MCF 10A (cell line): ENCODE measurements at regions of chr13 and their contacts with region 1.

Region 1: DNA sequence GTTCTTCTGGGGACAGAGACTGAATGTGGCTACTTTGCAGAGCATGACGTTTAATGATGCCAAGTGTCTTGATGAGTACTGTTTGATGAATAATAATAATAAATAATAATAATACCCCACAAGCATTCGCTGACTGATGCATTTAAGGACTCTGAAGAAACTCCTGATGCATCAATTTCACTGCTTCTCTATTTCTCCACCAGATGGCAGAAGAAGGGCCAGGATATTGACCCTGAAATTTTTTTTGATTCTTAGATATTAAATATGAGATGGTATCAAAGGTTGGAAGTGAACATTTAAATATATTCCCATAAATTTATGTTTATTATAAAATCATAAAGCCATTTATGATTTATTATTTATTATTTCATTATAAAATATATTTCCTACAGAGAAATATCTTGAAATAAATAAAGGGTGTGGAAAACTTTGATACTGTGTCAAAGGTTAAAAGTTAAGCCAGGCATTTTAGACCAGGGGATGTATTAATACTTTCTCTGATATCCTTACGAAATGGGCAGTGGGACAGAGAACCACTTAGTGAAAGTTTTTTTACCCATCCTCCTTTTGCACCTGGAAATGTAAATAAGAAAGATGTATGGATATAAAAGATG is 170.9 kb downstream of the LACC1 start:
- DNase-seq: peak; percentile 54
- H3K4me3 Mint-ChIP-seq: no peak overlapping the region
- H3K27ac Mint-ChIP-seq: no peak overlapping the region
- H3K4me1 Mint-ChIP-seq: peaks cover 5% of the 10 kb centered on the region
- H3K27me3 Mint-ChIP-seq: peaks cover 26% of the 10 kb centered on the region
- CTCF ChIP-seq: peak; percentile 62

Region 2: GRCh38 chr13:43911871-43912270 is 138.7 kb before region 1 on chr13:
- CTCF ChIA-PET with region 1: interaction called, 111 read pairs
- POLR2A ChIA-PET with region 1: interaction called, 4 read pairs
- intact Hi-C with region 1: loop called (anchors 1 kb)
- DNase-seq: no peak
- H3K4me3 Mint-ChIP-seq: no peak overlapping the region
- H3K27ac Mint-ChIP-seq: no peak overlapping the region
- H3K4me1 Mint-ChIP-seq: peaks cover 8% of the 10 kb centered on the region
- H3K27me3 Mint-ChIP-seq: no peaks in the 10 kb centered on the region
- CTCF ChIP-seq: no peak

Region 3: DNA sequence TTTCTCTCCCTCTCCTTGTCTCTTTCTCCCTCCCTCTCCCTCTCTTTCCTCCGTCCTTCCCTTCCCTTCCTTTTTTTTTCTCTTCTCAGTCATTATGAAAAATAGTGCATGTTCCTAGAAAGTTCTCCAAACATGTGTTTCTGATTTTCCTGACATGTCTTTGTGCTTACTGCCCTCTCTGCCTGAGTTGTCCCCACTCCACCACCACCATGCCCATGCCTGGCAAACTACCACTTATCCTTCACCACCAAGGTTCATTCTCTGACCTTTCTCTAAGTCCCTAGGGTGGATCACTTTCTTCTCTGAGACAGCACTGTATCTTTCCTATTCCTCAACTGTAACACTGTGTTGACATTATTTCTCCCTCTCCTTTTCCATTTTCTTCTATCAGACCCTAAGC is 72.6 kb before region 1 on chr13:
- CTCF ChIA-PET with region 1: no interaction called
- POLR2A ChIA-PET with region 1: no interaction called
- intact Hi-C with region 1: no loop called
- DNase-seq: no peak
- H3K4me3 Mint-ChIP-seq: no peak overlapping the region
- H3K27ac Mint-ChIP-seq: no peak overlapping the region
- H3K4me1 Mint-ChIP-seq: no peaks in the 10 kb centered on the region
- H3K27me3 Mint-ChIP-seq: peaks cover 19% of the 10 kb centered on the region
- CTCF ChIP-seq: no peak

Region 4: DNA sequence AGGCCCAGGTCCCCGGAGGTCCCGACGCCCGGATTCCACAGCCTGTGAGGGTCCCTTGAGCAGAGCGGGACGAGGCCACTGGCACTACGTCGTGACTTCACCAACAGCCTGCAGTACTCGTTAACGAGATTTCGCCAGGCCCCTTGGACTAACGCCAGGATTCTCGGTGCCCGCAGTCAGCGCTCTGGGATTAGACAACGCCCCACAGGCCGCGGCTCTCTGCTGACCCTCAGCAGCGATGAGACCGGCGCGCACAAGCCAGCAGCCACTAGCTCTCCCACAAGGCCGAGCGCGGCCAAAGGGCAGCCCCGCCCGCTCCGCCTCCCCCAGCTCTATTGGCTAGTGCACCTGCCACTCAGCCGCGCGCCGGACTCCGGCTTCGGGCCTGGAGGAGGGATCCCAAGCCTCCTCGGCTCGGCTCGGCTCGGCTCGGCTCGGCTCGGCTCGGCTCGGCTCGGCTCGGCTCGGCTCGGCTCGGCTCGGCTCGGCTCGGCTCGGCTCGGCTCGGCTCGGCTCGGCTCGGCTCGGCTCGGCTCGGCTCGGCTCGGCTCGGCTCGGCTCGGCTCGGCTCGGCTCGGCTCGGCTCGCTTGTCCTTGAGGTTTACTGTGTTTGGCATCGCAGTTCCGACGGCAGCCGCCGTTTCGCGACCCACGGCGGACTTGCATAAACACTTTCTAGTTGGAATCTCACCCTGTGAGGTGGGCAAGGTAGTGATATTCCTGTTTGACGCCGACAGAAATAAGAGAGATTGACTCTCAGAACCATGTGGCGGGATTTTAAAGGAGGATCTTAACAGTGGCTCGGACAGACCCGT is 91.4 kb after region 1 on chr13:
- CTCF ChIA-PET with region 1: interaction called, 4 read pairs
- POLR2A ChIA-PET with region 1: interaction called, 6 read pairs
- intact Hi-C with region 1: loop called (anchors 2 kb)
- DNase-seq: peak; percentile 97
- H3K4me3 Mint-ChIP-seq: peak overlapping the region; percentile 91
- H3K27ac Mint-ChIP-seq: peak overlapping the region; percentile 100
- H3K4me1 Mint-ChIP-seq: peaks cover 14% of the 10 kb centered on the region
- H3K27me3 Mint-ChIP-seq: no peaks in the 10 kb centered on the region
- CTCF ChIP-seq: no peak

Region 5: GRCh38 chr13:44231786-44232516 is 181.4 kb after region 1 on chr13:
- CTCF ChIA-PET with region 1: no interaction called
- POLR2A ChIA-PET with region 1: no interaction called
- intact Hi-C with region 1: loop called (anchors 2 kb)
- DNase-seq: peak; percentile 99
- H3K4me3 Mint-ChIP-seq: peak overlapping the region; percentile 34
- H3K27ac Mint-ChIP-seq: peak overlapping the region; percentile 86
- H3K4me1 Mint-ChIP-seq: peaks cover 28% of the 10 kb centered on the region
- H3K27me3 Mint-ChIP-seq: no peaks in the 10 kb centered on the region
- CTCF ChIP-seq: no peak

Region 6: DNA sequence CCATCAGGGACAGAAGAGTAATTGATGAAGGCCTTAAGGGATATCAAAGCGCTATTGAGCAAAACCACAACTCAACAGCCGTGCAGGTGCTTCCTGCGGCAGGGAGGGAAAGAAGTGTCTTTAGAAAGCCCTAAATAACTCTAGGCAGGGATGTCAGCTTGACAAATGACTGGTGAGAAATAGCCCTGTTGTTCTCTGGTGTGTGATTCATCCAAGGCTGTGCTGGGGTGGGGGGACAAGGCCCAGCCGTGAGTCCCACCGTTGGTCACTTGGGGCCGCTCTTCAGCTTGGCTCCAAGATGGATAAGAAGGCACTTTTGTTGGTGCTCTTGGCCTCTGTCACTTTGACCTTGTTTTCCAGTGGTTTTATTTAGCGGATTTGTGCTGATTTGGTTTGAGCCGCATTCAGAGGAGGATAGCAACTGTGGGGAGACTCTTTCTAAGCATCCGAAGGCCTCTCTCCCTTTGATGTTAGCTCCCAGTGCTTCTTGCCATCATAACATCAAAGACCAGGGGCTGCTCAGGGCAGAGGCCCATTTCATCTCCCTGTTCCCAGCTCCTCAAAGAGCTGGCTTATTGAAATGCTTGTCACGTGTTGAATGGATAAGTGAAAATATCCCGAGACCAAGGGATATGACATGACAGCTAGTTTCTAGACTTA is 192.8 kb after region 1 on chr13:
- CTCF ChIA-PET with region 1: interaction called, 3 read pairs
- POLR2A ChIA-PET with region 1: interaction called, 3 read pairs
- intact Hi-C with region 1: loop called (anchors 1 kb)
- DNase-seq: peak; percentile 97
- H3K4me3 Mint-ChIP-seq: no peak overlapping the region
- H3K27ac Mint-ChIP-seq: peak overlapping the region; percentile 81
- H3K4me1 Mint-ChIP-seq: peaks cover 29% of the 10 kb centered on the region
- H3K27me3 Mint-ChIP-seq: no peaks in the 10 kb centered on the region
- CTCF ChIP-seq: peak; percentile 71

Region 7: DNA sequence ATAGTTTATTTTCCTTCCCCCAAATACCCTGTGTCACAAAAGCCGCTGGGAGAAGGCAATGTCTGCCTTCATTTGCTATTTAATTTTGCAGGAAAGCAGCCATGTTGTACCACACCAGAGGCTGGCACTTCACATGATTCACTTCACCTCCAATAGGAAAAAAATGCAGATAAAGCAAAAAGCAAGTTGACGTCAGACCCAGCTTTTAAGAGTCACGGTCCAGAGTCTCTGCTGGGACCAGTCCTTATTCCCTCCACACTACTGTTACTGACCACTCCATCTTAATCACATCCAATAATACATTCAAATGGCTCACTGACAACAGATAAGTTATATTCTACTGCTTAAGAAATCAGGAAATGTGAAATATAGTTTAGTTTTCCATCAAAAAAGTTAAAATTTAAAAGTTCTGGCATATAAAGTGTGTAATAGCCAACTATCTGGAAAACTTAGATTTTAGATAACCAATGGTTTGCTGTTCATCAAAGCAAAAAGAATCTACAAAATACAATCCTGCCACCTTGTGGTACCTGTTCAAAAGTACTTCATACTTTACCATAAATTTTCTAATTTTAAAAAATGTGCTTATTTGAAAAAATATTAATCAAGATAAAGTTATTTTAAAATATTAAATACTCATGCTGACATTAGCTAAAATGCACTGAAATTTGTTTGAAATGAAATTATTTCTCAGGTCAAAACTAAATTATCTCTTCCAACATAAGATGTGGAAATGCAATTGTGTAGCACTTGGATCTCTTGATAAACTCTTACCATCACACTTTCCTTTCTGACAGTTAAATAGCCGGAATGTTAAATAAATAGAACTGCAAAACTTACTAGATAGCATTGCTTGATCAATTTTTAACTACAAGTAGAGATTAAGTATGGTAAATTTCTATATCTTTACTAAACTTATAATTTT is 420.3 kb after region 1 on chr13:
- CTCF ChIA-PET with region 1: interaction called, 7 read pairs
- POLR2A ChIA-PET with region 1: interaction called, 3 read pairs
- intact Hi-C with region 1: loop called (anchors 1 kb)
- DNase-seq: peak; percentile 50
- H3K4me3 Mint-ChIP-seq: no peak overlapping the region
- H3K27ac Mint-ChIP-seq: no peak overlapping the region
- H3K4me1 Mint-ChIP-seq: peaks cover 6% of the 10 kb centered on the region
- H3K27me3 Mint-ChIP-seq: no peaks in the 10 kb centered on the region
- CTCF ChIP-seq: peak; percentile 58

Region 8: DNA sequence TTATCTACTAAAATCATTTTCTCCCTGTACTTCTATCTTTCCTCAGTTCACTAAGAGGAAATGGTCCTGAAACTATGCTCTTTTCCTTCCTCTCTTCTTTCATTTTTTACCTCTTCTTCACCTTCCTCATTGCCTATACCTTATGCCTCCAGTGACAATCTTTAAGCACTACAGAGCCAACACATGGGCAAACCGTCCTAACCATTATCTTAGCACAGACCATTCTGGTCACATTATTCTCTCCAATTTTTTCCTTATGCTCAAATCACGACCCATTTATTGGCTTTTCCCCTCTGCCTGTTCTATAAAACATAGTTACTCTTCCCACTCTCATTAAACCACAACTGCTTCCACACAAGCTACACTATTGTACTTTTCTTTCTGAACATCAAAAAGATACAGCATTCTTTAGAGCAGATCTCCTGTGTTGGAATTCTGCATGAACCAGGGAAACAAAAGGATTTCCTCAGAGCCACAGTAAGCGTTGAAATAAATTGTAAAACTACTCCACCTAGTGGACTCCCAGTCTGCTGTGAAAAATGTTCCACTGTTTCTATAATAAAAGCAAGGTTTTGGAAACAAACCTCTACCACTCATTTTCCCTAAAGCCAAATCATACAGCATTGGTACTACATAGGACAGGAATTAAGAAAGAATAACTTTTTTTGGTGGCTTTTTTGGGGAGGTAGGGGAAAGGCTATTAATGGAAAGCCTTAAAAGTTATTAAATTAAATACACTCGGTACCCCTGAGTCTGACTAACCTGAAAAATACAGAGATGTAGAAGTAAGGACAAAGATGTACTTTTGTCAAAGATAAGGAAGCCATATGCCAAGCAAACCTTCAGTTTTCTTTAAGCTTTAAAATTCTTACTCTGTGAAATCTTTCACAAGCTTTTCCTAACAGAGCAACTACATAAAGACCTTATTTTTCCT is 919.3 kb after region 1 on chr13:
- CTCF ChIA-PET with region 1: no interaction called
- POLR2A ChIA-PET with region 1: interaction called, 3 read pairs
- intact Hi-C with region 1: loop called (anchors 1 kb)
- DNase-seq: peak; percentile 66
- H3K4me3 Mint-ChIP-seq: no peak overlapping the region
- H3K27ac Mint-ChIP-seq: no peak overlapping the region
- H3K4me1 Mint-ChIP-seq: peaks cover 15% of the 10 kb centered on the region
- H3K27me3 Mint-ChIP-seq: no peaks in the 10 kb centered on the region
- CTCF ChIP-seq: peak; percentile 70